SK-N-SH (cell line): ENCODE measurements at regions of chr11 and their contacts with region 1.

Region 1: DNA sequence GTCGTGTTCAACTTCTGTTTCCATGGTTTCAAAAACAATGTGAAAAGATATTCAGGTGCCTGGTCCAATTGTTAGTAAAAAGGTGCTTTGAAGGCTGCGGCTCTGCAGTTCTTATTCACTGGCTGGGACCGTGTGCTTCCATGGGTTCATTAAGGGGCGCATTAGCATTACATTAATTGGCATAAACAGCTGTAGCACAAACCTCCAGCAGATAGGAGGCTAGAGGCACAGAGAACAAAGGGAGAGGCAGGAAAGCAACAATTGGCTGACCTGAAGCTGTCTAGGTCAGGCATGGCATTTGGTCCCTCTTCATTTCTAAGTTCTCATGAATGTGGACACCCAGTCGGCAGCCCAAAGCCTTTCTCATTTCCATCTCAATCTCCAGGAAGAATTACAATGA is 16.6 kb downstream of the PAK1 start:
- DNase-seq: no peak
- H3K4me3 ChIP-seq: no peak overlapping the region
- H3K27ac ChIP-seq: no peak overlapping the region
- H3K4me1 ChIP-seq: peaks cover 0 to 3% of the 10 kb centered on the region in 2 experiments; a peak in 2 of 4 replicates
- H3K27me3 ChIP-seq: no peaks in the 10 kb centered on the region
- CTCF ChIP-seq: no peak
- EP300 ChIP-seq: no peak
- RAD21 ChIP-seq: no peak

Region 2: DNA sequence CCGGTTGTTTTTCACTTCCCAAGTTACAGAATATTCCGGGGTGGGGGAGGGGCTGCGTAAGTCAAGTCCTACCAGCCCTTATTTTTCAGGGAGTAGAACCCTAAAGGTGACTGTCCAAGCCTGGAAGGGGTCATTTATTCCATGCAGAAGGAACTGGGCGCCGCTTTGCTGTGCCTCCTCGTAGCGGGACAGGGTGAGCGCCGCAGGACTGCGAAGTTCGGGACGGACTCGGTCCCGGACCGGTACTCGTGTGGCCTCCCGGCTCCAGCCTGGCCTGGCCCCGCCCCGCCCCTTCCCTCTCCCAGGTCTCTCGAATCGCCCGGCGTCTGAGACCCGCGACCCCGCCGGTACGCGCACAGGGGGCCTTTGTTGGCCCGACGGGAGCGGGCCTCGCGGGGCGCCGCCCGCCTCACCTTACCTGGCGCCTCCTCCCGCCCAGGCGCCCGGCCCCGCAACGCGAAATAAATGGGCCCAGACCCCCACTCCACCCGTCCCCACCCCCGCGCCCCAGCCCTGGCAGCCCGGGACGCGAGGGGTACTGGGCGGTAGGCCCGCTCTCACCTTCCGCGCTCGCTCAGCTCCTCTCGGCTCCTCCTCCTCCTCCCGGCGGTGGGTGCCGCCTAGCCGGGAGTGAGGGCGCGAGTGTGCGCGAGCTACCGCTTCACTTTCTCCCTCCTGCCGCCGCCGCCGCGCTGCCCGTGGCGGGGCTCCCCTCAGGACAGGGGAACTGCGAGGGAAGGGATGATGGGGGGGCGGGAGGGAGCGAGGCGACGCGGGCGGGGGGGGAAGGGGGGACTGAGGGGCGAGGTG is 15.9 kb after region 1 on chr11:
- CTCF ChIA-PET with region 1: interaction called, 22 read pairs
- POLR2A ChIA-PET with region 1: no interaction called
- DNase-seq: peak; percentile 78
- H3K4me3 ChIP-seq: peak overlapping the region; percentile 67 to 69
- H3K27ac ChIP-seq: peak overlapping the region in 1 of 2 experiments; percentile 74; a peak in 2 of 4 replicates
- H3K4me1 ChIP-seq: peaks cover 0 to 5% of the 10 kb centered on the region in 2 experiments; a peak in 1 of 4 replicates
- H3K27me3 ChIP-seq: no peaks in the 10 kb centered on the region
- CTCF ChIP-seq: no peak
- EP300 ChIP-seq: no peak
- RAD21 ChIP-seq: no peak